ENCODE measurements at regions of chrX and their contacts with region 1.

Region 1: GRCh38 chrX:6363188-6363587 is 134.5 kb upstream of the NLGN4X start:
- DNase-seq: no peak
- ATAC-seq: no peak
- H3K4me3 ChIP-seq: no peak overlapping the region
- H3K27ac ChIP-seq: no peak overlapping the region
- H3K4me1 ChIP-seq: no peaks in the 10 kb centered on the region
- H3K27me3 ChIP-seq: no peaks in the 10 kb centered on the region
- CTCF ChIP-seq: no peak
- POLR2A ChIP-seq: no peak

Region 2: GRCh38 chrX:5976332-5976731 is 386.9 kb before region 1 on chrX:
- in situ Hi-C with region 1: no loop called
- intact Hi-C with region 1: no loop called
- DNase-seq: no peak
- ATAC-seq: no peak
- H3K4me3 ChIP-seq: no peak overlapping the region
- H3K27ac ChIP-seq: no peak overlapping the region
- H3K4me1 ChIP-seq: no peaks in the 10 kb centered on the region
- H3K27me3 ChIP-seq: no peaks in the 10 kb centered on the region
- CTCF ChIP-seq: no peak
- POLR2A ChIP-seq: no peak

Region 3: GRCh38 chrX:6383917-6384316 is 20.7 kb after region 1 on chrX:
- in situ Hi-C with region 1: no loop called
- intact Hi-C with region 1: loop called (anchors 2 kb)
- DNase-seq: no peak
- ATAC-seq: no peak
- H3K4me3 ChIP-seq: no peak overlapping the region
- H3K27ac ChIP-seq: no peak overlapping the region
- H3K4me1 ChIP-seq: no peaks in the 10 kb centered on the region
- H3K27me3 ChIP-seq: no peaks in the 10 kb centered on the region
- CTCF ChIP-seq: no peak
- POLR2A ChIP-seq: no peak

Region 4: DNA sequence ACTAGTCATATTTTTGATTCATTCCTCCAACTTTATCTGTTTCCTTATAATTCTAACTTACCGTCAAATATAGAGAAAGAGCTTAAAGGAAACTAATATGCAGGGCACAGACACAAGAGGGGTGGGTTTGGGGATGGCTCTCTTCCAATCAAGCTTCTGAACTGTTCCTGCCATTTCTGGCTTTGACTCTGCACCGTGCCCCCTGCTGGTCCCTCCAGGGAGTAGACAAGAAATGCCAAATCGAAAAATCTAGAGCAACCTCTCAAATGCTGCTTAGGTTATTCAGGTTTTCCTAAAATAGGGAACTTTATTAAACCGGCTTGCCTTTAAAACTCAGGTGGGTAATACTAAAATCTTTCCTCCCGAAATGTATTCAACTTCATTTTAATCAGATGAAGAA is 211.6 kb after region 1 on chrX:
- in situ Hi-C with region 1: no loop called
- intact Hi-C with region 1: no loop called
- DNase-seq: no peak
- ATAC-seq: no peak
- H3K4me3 ChIP-seq: no peak overlapping the region
- H3K27ac ChIP-seq: no peak overlapping the region
- H3K4me1 ChIP-seq: no peaks in the 10 kb centered on the region
- H3K27me3 ChIP-seq: no peaks in the 10 kb centered on the region
- CTCF ChIP-seq: no peak
- POLR2A ChIP-seq: no peak